H1 (cell line): ENCODE measurements at regions of chr10 and their contacts with region 1.

Region 1: GRCh38 chr10:29517352-29517923 is 117.3 kb downstream of the SVIL start:
- DNase-seq: peak in 1 of 2 experiments; percentile 70
- H3K4me3 ChIP-seq: no peak overlapping the region
- H3K27ac ChIP-seq: no peak overlapping the region
- H3K4me1 ChIP-seq: no peaks in the 10 kb centered on the region
- H3K27me3 ChIP-seq: no peaks in the 10 kb centered on the region
- CTCF ChIP-seq: peak; percentile 30 to 68 (median 62)
- EP300 ChIP-seq: no peak
- POLR2A ChIP-seq: no peak
- RAD21 ChIP-seq: peak in 1 of 2 experiments; percentile 39; a peak in 2 of 4 replicates

Region 2: DNA sequence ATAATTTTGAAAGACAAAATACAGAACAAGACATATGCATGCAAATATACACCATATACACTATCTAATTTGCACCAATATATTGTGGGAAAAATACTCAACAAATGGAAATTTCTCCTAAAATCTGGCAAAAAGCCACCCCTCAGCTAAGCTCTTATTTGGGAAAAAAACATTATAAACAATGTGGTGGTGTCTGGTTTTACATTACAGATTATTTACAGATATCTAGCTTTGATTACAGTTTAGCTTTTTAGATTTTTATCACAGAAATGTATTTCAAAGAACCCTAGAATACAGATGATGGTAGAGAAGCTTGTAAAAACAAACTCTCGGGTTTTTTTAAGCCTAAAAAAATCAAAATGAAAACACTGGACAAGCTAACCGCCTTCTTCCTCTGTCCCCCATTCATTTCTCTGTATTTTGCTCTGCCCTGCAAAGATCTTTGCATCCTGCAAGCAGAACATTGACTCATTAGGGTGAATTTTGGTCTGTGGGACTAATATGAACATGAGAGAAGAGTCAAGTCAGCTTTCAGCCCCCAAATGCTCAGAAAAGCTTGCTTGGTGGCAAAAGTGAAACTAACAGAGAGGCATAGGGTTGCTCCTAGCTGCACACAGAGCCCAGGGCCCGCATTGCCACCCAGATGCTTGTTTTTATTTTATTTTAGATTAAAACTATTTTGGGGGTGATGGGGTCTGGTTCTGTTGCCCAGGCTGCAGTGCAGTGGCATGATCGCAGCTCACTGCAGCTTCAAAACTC is 317.3 kb before region 1 on chr10:
- CTCF ChIA-PET with region 1: no interaction called
- POLR2A ChIA-PET with region 1: no interaction called
- DNase-seq: no peak
- H3K4me3 ChIP-seq: no peak overlapping the region
- H3K27ac ChIP-seq: no peak overlapping the region
- H3K4me1 ChIP-seq: peaks cover 3 to 9% (median 6%) of the 10 kb centered on the region in 4 experiments; a peak in 5 of 7 replicates
- H3K27me3 ChIP-seq: no peaks in the 10 kb centered on the region
- CTCF ChIP-seq: no peak
- EP300 ChIP-seq: no peak
- POLR2A ChIP-seq: no peak
- RAD21 ChIP-seq: no peak

Region 3: DNA sequence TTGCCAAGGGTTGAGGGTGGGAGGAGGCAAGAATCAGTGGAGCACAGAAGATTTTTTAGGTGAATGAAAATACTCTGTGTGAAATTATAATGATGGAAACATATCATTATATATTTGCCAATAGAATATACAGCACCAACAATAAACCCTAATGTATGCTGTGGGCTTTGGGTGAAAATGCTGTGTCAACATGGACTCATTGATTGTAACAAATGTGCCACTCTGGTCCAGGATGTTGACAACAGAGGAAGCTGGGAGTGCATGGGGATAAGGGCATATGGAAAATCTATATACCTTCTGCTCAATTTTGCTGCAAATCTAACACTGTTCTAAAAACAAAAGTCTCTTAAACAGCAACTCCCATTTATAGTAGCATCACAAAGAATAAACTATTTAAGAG is 114.2 kb before region 1 on chr10:
- CTCF ChIA-PET with region 1: no interaction called
- POLR2A ChIA-PET with region 1: no interaction called
- DNase-seq: no peak
- H3K4me3 ChIP-seq: no peak overlapping the region
- H3K27ac ChIP-seq: no peak overlapping the region
- H3K4me1 ChIP-seq: no peaks in the 10 kb centered on the region
- H3K27me3 ChIP-seq: no peaks in the 10 kb centered on the region
- CTCF ChIP-seq: no peak
- EP300 ChIP-seq: no peak
- POLR2A ChIP-seq: no peak
- RAD21 ChIP-seq: no peak

Region 4: GRCh38 chr10:29501692-29502091 is 15.7 kb before region 1 on chr10:
- CTCF ChIA-PET with region 1: interaction called, 22 read pairs
- POLR2A ChIA-PET with region 1: interaction called, 3 read pairs
- DNase-seq: no peak
- H3K4me3 ChIP-seq: no peak overlapping the region
- H3K27ac ChIP-seq: no peak overlapping the region
- H3K4me1 ChIP-seq: no peaks in the 10 kb centered on the region; a peak in 1 of 7 replicates
- H3K27me3 ChIP-seq: no peaks in the 10 kb centered on the region
- CTCF ChIP-seq: no peak
- EP300 ChIP-seq: no peak
- POLR2A ChIP-seq: no peak
- RAD21 ChIP-seq: no peak